ENCODE measurements at regions of chr5 and their contacts with region 1.

Region 1: GRCh38 chr5:34522599-34523386 is 133.3 kb upstream of the RAI14 start:
- DNase-seq: peak; percentile 82
- H3K4me3 ChIP-seq: no peak overlapping the region
- H3K27ac ChIP-seq: no peak overlapping the region
- H3K4me1 ChIP-seq: no peaks in the 10 kb centered on the region
- H3K27me3 ChIP-seq: no peaks in the 10 kb centered on the region
- CTCF ChIP-seq: peak; percentile 43 to 84 (median 78)
- POLR2A ChIP-seq: no peak

Region 2: DNA sequence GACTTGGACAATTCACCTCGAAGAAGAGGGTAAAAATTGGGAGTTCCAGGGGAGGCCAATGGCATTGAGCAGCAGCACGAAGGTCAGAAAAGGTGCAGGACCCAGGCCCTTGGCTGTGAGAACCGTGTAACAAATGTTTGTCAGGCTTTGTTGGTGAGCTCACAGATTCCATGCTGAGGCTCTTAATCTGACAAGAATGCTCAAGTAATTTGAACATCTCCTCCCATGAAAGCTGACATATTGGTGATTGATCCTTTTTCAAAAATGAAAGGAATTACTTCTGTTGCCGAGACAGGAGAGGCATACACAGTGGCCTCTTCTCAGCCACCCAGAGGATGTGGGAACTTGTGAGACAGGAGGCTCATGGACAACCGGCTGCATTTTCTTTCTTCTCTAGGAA is 144.9 kb after region 1 on chr5:
- intact Hi-C with region 1: no loop called
- DNase-seq: no peak
- H3K4me3 ChIP-seq: no peak overlapping the region
- H3K27ac ChIP-seq: no peak overlapping the region
- H3K4me1 ChIP-seq: no peaks in the 10 kb centered on the region
- H3K27me3 ChIP-seq: no peaks in the 10 kb centered on the region
- CTCF ChIP-seq: no peak
- POLR2A ChIP-seq: no peak

Region 3: GRCh38 chr5:34898258-34898895 is 375.6 kb after region 1 on chr5:
- intact Hi-C with region 1: loop called (anchors 2 kb)
- DNase-seq: peak; percentile 71
- H3K4me3 ChIP-seq: no peak overlapping the region
- H3K27ac ChIP-seq: no peak overlapping the region
- H3K4me1 ChIP-seq: no peaks in the 10 kb centered on the region
- H3K27me3 ChIP-seq: no peaks in the 10 kb centered on the region
- CTCF ChIP-seq: peak; percentile 77 to 92 (median 84)
- POLR2A ChIP-seq: no peak